Mammary epithelial cell (primary cell): ENCODE measurements at regions of chr14 and their contacts with region 1.

Region 1: DNA sequence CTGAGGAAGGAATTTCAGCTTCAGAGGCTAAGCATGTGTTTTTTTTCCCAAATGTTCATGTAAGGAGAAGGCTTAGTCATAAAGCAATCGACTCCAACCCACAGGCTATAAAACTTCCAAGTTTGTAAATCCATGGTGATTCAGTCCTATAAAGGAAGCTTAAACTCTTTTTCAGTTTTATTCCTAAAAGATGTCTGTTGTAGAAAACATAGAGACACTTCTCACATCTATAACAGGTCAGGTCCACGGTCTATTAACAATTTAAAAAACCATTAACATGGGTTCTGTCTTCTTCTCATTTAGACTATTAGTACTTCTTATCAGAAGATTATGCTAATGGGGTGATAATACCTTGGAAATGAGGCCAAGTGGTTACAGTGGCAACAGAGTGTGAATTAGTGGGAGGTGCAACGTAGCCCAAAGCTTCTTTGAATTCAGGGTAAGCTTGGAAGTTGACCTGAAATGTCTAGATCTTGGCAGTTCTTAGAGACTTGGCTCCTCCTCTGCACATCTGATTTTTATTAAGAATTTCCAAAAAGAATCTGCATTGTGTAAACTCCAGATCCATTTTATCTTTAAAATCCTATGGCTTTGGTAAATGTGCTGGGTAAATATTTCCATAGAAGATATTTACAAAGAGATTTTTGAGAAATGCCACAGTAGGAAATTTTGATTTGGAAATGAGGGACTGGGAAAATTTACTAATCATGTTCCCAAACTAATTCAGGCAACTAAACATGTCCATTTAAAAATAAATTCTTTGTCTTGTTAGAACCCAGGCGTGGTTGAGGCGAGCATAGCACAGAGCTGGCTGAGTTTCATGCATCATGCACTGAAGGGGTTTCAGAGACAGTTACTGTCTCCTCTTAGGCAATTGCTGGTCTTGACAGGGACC is 86.4 kb downstream of the EML1 start:
- DNase-seq: peak; percentile 28
- H3K4me3 ChIP-seq: no peak overlapping the region
- H3K27ac ChIP-seq: no peak overlapping the region
- H3K4me1 ChIP-seq: no peaks in the 10 kb centered on the region
- H3K27me3 ChIP-seq: peaks cover 6% of the 10 kb centered on the region
- CTCF ChIP-seq: no peak

Region 2: GRCh38 chr14:99724196-99724891 is 155.3 kb before region 1 on chr14:
- CTCF ChIA-PET with region 1: no interaction called
- dilution Hi-C with region 1: loop called (anchors 5 kb)
- in situ Hi-C with region 1: no loop called
- intact Hi-C with region 1: no loop called
- DNase-seq: no peak
- H3K4me3 ChIP-seq: no peak overlapping the region
- H3K27ac ChIP-seq: no peak overlapping the region
- H3K4me1 ChIP-seq: no peaks in the 10 kb centered on the region
- H3K27me3 ChIP-seq: no peaks in the 10 kb centered on the region
- CTCF ChIP-seq: no peak

Region 3: GRCh38 chr14:99793213-99794150 is 86.2 kb before region 1 on chr14 and contains the start of gene EML1:
- CTCF ChIA-PET with region 1: no interaction called
- dilution Hi-C with region 1: no loop called
- in situ Hi-C with region 1: no loop called
- intact Hi-C with region 1: no loop called
- DNase-seq: peak; percentile 52
- H3K4me3 ChIP-seq: peak within 1 kb of the TSS; percentile 44 to 59 (median 50)
- H3K27ac ChIP-seq: no peak within 1 kb of the TSS
- H3K4me1 ChIP-seq: peaks cover 4% of the 10 kb centered on the region
- H3K27me3 ChIP-seq: peaks cover 12% of the 10 kb centered on the region
- CTCF ChIP-seq: no peak
- total RNA-seq, gene EML1: 2.8 to 4.2 TPM

Region 4: GRCh38 chr14:100025111-100025510 is 145.5 kb after region 1 on chr14:
- CTCF ChIA-PET with region 1: no interaction called
- dilution Hi-C with region 1: no loop called
- in situ Hi-C with region 1: no loop called
- intact Hi-C with region 1: no loop called
- DNase-seq: peak; percentile 37
- H3K4me3 ChIP-seq: no peak overlapping the region
- H3K27ac ChIP-seq: no peak overlapping the region
- H3K4me1 ChIP-seq: peaks cover 7% of the 10 kb centered on the region
- H3K27me3 ChIP-seq: no peaks in the 10 kb centered on the region
- CTCF ChIP-seq: peak; percentile 33 to 71